ENCODE measurements at regions of chr16 and their contacts with region 1.

Region 1: DNA sequence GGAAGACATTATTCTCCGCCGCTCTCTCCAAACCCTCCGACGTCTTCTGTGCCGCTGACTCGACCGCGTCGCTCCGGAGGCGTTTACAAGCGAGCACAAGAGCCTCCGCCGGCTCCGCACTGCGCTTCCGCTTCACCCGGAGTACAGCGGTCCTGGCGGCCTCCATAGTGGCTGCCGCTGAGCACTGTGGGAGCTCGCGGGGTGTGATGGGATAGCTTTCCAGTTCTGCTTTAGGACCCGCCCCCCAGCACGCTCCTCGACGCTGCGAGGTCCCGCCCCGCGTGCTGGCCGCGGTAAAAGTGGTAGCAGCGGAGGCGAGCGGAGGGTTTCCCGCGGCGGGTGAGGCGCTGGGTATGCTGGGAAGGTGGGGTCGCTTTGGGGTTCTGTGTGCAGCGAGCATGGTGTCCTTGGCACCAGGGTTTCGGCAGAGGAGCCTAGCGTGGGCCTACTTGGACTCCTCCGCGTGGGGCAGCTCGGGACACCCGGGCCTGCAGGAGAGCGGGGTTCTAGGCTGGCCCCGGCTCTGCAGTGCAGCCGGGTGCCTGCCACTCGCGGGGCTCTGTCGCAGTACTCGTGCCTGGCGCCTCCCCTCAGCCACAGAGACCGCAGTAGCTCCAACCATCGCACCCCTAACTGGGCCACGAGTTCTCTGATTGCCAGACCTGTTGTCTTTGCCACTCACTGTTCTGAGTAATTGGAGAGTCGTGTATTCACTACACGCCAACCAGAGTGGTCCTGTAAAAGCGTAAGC is at the starts of genes PRMT7 and SLC7A6OS:
- DNase-seq: peak; percentile 89 to 99 (median 92)

Region 2: GRCh38 chr16:68085259-68086071 is 225.5 kb before region 1 on chr16 and contains the start of gene NFATC3:
- intact Hi-C with region 1: loop called (anchors 10 kb)
- DNase-seq: peak; percentile 94 to 99 (median 98)

Region 3: DNA sequence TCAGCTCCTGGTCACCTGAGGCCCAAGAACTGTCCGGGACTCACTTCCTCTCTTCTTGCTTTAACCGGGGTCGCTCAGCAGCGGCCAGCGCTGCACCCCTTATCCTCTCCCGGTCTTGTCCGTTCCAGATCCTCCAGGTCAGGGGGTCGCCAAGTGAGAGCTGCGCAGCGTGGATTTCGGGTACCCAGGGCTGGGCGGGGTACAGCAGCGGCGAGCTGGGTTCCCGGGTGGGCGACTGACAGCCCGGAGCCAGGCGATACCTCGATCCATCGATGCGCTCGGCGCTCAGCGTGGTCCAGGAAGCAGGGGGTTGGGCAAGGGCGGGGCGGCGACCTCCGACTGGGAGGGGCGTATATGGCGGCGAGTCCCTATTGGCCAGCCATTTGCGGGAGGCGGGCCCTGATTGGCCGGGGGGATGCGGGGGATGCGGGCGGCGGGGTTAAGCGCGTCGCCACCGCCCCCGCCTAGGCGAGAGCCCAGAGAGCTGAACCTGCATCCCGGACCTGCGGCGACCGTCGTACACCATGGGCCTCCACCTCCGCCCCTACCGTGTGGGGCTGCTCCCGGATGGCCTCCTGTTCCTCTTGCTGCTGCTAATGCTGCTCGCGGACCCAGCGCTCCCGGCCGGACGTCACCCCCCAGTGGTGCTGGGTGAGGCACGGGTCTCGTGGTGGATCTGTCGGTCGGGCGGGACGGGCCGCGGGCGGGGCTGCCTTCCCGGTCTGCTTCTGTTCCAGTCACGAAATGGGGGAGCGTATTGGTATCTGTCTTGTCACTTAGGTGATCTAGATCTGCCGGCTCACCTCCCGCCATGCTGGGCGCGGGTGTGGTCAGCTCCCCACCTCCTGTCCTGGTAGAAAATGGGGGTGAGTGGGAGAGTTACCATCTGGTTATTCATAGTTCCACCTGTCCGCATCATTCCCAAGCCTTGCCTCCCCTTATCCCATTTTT is 65.8 kb before region 1 on chr16 and contains the start of gene PLA2G15:
- intact Hi-C with region 1: loop called (anchors 2 kb)
- DNase-seq: peak; percentile 95 to 99 (median 96)

Region 4: DNA sequence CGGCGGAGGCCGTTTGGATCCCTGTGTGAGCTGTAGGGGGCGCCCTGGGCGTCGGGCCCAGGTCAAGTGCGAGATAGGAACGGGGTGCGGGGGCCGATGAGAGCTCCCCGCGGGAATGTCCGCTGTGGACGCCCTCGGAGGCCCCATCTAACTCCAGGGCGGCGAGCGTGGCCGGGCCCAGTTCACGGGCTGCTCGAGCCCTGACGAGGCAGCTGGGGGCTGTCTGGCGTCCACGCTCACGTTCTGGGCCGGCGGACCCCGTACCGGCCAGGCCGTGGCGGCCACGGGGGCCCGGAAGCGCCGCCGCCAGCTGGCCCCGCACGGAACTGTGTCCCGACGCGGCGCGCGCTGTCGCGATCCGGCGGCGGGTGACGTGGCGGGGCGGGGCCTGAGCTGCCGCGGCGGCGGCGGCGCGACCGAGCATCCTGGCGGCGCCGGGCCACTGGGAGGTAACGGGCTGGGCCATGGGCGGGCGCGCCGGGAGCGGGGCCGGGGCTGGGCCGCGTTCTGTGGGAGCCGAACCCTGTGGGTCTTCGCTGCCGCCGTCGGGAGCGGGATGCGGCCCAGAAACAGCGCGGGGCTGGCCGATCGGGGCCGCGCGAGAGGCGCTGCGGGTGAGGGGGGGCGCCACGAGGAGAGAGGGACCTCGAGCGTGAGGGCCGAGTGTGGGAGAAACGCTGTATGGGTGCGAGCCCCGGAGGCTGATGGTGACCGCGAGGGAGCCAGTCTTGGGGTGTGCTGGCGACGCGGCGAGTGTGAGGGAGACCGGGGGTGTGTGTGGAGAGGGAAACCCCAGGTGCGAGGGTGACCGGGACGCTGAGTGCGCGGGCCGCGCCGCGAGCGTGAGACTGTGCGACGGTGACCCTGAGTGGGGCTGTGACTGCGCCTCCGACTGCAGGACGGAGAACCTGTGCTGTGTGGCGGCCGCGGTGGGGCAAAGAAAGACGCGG is 46.5 kb before region 1 on chr16 and contains the start of gene SLC7A6:
- intact Hi-C with region 1: loop called (anchors 5 kb)
- DNase-seq: peak; percentile 56 to 96 (median 70)

Measured in posterior cingulate gyrus (tissue), 11 donors.